Lower leg skin (tissue), 4 donors: ENCODE measurements at regions of chrX and their contacts with region 1.

Region 1: GRCh38 chrX:115330498-115331168 is 41.1 kb downstream of the LUZP4 start:
- DNase-seq: no peak
- H3K4me3 ChIP-seq: no peak overlapping the region
- CTCF ChIP-seq: no peak
- POLR2A ChIP-seq: no peak

Region 2: DNA sequence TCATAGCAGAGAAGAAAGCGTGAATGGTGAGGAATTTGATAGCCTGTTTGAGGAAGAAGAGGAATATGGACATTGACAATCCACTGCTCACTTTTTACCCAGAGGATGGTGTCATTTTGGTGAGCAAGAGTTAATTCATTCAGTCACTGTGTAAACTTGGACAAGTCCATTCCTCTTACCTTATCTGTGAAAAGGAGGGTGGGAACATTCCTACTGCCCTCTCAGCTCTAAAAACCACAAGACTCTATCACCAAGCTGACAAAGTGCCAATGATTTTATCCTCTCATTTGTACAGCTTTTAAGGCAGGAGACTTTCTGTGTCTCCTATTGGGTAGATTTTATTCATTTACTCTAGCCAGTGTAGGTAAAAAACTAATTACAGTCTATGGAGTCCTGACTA is 62.6 kb after region 1 on chrX:
- intact Hi-C with region 1: no loop called
- DNase-seq: no peak
- H3K4me3 ChIP-seq: no peak overlapping the region
- CTCF ChIP-seq: no peak
- POLR2A ChIP-seq: no peak

Region 3: GRCh38 chrX:115449742-115450141 is 119.1 kb after region 1 on chrX:
- intact Hi-C with region 1: no loop called
- DNase-seq: peak in 1 of 2 donors; percentile 15
- H3K4me3 ChIP-seq: no peak overlapping the region
- CTCF ChIP-seq: no peak
- POLR2A ChIP-seq: no peak

Region 4: GRCh38 chrX:115642895-115643530 is 312.4 kb after region 1 on chrX:
- intact Hi-C with region 1: loop called (anchors 5 kb)
- DNase-seq: peak in 1 of 2 donors; percentile 51
- H3K4me3 ChIP-seq: no peak overlapping the region
- CTCF ChIP-seq: peak in 1 of 3 donors; percentile 60
- POLR2A ChIP-seq: no peak

Region 5: GRCh38 chrX:115665122-115665521 is 334.5 kb after region 1 on chrX:
- intact Hi-C with region 1: no loop called
- DNase-seq: no peak
- H3K4me3 ChIP-seq: no peak overlapping the region
- CTCF ChIP-seq: no peak
- POLR2A ChIP-seq: no peak